Panc1 (cell line): ENCODE measurements at regions of chr2 and their contacts with region 1.

Region 1: DNA sequence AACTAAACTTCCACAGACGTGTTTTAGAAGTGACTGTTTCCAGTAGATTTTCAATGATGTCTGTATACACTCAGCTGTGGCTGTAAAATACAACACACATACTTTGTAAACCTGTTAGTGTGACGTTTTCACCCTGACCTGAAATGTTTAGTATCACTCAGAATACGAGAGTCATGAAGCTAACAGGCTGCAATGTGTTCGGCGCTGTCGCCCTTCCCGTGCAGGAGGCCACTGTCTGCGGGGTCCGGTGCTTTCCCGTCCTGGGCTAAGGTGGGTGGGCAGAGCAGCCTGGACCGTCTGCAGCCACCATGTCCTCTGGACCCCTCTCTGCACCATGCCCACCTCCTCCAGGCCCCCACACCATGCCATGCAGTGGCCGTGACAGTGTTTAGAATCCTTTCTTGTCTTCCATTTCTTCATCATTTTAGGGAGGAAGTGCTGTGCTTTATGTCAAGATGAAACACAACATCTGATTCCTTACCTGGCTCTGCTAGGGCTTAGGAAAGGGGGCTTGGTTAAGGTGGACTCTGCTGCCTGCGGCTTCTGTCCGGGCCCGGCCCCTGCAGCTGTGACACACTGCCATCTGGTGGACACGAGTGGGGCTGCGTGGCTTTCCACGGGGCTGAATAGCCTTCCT is 53.8 kb upstream of the RBM44 start:
- DNase-seq: peak; percentile 32
- ATAC-seq: peak; percentile 85
- H3K4me3 ChIP-seq: no peak overlapping the region
- H3K27ac ChIP-seq: peak overlapping the region; percentile 34; the same call in 1 of the 2 replicates
- H3K4me1 ChIP-seq: peaks cover 16% of the 10 kb centered on the region
- H3K27me3 ChIP-seq: no peaks in the 10 kb centered on the region
- CTCF ChIP-seq: peak; percentile 96

Region 2: GRCh38 chr2:237500681-237501424 is 243.9 kb before region 1 on chr2:
- CTCF ChIA-PET with region 1: no interaction called
- POLR2A ChIA-PET with region 1: no interaction called
- in situ Hi-C with region 1: no loop called
- intact Hi-C with region 1: no loop called
- DNase-seq: peak; percentile 94
- ATAC-seq: peak; percentile 92
- H3K4me3 ChIP-seq: peak overlapping the region in 1 of 2 experiments; percentile 30; a peak in 2 of 4 replicates
- H3K27ac ChIP-seq: peak overlapping the region; percentile 67
- H3K4me1 ChIP-seq: peaks cover 30% of the 10 kb centered on the region
- H3K27me3 ChIP-seq: no peaks in the 10 kb centered on the region
- CTCF ChIP-seq: no peak

Region 3: DNA sequence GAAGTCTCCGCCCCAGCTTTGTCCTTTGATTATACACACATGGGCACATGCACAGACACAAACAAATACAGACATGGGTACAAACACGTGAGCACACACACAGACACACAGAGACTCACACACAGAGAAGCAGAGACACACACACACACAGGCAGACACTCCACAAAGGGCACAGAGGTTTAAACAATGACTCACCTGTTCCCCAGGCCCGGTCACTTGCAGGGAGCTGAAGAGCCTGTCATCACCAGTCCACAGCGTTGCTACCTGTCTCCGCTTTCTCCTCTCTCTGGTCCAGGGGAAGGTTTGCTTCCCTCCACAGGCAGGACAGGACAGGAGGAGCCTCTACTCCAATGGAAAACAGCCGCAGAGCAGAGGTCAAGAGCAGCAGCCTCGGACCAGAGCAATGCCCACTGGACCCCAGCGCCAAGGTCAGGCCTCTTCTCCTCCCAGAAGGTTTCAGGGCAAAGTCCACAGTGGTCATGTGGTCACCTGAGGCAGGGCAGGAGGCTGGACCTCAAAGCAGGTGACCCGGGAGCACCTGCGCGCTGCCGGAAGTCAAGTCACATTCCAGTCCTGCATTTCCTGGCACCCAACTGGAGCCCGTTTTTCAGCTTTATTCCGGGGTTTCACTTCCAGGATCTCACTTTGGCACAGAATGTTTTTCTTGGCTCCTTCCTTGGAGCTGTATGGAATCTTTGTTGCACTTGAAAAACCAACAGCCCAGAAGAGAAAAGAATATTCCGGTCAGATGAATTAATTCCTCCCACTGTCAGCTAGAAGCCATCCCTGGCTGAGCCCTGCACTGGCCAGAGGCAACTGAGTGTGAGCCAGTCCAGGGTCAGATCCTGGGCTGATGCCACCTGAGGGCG is 154.2 kb before region 1 on chr2 and contains the start of gene RAB17:
- CTCF ChIA-PET with region 1: no interaction called
- POLR2A ChIA-PET with region 1: no interaction called
- in situ Hi-C with region 1: no loop called
- intact Hi-C with region 1: loop called (anchors 10 kb)
- DNase-seq: no peak
- ATAC-seq: peak; percentile 50
- H3K4me3 ChIP-seq: peak within 1 kb of the TSS; percentile 27 to 42
- H3K27ac ChIP-seq: peak within 1 kb of the TSS; percentile 82
- H3K4me1 ChIP-seq: peaks cover 39% of the 10 kb centered on the region
- H3K27me3 ChIP-seq: no peaks in the 10 kb centered on the region
- CTCF ChIP-seq: no peak
- total RNA-seq, gene RAB17: 23.6 TPM

Region 4: DNA sequence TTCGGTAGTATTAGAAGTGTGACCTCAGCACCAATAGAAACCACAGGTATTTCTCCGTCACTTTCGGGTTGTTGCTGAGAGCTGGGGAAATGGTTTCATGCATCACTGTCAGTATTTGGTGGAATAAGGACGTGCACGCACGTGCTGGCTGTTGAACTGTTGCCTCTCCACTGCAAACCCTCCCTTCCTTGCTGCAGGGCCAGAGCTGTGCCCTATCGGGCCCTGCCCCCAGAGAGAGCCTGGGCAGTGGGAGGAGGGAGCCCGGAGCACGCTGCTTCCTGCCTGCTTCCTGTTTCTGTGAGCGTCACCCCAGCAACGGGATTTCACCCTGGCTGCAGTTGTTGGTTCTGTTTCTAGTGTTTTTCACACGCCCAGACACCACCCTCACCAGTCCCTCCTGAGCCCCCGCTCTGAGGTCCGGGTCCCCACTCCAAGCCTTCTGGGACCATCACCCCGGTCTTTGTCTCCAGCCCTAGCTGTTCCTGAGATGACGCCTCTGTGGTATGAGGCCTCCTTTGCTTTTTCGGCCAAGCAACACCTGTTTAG is 69.9 kb before region 1 on chr2:
- CTCF ChIA-PET with region 1: interaction called, 23 read pairs
- POLR2A ChIA-PET with region 1: no interaction called
- in situ Hi-C with region 1: no loop called
- intact Hi-C with region 1: loop called (anchors 2 kb)
- DNase-seq: no peak
- ATAC-seq: peak; percentile 88
- H3K4me3 ChIP-seq: peak overlapping the region; percentile 22 to 44
- H3K27ac ChIP-seq: peak overlapping the region; percentile 72
- H3K4me1 ChIP-seq: peaks cover 29% of the 10 kb centered on the region
- H3K27me3 ChIP-seq: no peaks in the 10 kb centered on the region
- CTCF ChIP-seq: no peak